ENCODE measurements at regions of chr15 and their contacts with region 1.

Region 1: DNA sequence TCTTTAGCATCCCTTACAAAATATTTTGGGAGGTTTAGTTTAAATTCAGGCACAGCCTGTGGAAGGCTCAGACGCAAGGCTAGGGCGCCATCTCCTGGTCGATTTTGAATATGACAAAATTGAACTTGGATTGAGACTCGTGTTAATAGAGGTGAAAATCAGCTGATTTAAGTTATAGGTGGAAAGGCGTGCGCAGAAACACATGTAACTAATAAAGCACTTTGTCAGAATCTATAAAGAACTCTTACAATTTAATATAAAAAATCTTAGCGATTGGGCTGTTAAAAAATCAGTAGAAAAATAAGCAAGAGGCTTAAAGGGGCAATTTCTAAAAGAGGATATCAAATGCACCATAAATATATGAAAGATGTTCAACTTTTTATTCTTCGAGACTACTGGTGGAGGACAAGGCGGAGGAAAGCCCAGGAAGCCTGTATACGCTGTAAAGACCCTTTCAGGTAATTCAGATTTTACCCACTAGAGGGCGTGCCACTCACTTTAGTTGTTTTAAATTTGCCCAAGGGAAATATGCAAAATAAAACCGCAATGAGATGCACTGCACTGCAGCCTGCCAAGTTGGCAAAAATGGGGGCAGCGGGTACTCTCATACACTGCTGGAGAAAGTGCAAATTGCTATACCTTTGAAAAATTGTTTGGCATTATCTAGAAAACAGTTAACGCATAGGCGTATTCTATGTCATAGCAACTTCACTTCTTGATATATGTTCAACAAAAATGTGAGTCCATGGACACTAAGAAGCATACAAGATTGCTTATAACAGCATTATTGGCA is 64.7 kb downstream of the SLC30A4 start:
- DNase-seq: peak; percentile 81
- H3K4me3 Mint-ChIP-seq: peak overlapping the region; percentile 54
- H3K27ac Mint-ChIP-seq: peak overlapping the region; percentile 69
- H3K4me1 Mint-ChIP-seq: peaks cover 47% of the 10 kb centered on the region
- H3K27me3 Mint-ChIP-seq: no peaks in the 10 kb centered on the region
- CTCF ChIP-seq: peak; percentile 55

Region 2: DNA sequence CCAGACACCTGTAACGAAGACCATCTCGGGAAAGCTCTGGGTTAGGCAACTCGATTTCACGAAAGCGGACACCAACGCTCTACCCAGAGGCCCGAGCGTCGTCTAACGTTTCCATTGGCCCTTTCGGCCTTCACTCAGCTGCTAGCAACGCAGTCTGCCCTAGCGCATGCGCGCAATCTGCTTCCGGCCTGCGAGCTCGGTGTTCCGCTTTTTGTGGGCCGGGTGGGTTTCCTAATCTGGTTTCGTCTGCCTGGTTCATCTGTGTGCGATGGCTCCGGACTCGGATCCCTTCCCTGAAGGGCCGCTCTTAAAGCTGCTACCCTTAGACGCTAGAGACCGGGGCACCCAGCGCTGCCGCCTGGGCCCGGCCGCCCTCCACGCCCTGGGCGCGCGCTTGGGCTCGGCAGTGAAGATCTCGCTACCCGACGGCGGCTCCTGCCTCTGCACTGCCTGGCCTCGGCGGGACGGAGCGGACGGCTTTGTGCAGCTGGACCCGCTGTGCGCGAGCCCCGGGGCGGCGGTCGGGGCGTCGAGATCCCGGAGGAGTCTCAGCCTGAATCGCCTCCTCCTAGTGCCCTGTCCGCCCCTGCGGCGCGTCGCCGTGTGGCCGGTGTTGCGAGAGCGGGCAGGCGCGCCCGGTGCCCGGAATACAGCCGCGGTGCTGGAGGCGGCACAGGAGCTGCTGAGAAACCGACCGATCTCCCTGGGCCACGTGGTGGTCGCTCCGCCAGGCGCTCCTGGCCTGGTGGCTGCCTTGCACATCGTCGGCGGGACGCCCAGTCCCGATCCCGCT is 55.5 kb before region 1 on chr15:
- CTCF ChIA-PET with region 1: no interaction called
- intact Hi-C with region 1: no loop called
- DNase-seq: peak; percentile 94
- H3K4me3 Mint-ChIP-seq: peak overlapping the region; percentile 93
- H3K27ac Mint-ChIP-seq: peak overlapping the region; percentile 58
- H3K4me1 Mint-ChIP-seq: peaks cover 9% of the 10 kb centered on the region
- H3K27me3 Mint-ChIP-seq: no peaks in the 10 kb centered on the region
- CTCF ChIP-seq: no peak

Region 3: DNA sequence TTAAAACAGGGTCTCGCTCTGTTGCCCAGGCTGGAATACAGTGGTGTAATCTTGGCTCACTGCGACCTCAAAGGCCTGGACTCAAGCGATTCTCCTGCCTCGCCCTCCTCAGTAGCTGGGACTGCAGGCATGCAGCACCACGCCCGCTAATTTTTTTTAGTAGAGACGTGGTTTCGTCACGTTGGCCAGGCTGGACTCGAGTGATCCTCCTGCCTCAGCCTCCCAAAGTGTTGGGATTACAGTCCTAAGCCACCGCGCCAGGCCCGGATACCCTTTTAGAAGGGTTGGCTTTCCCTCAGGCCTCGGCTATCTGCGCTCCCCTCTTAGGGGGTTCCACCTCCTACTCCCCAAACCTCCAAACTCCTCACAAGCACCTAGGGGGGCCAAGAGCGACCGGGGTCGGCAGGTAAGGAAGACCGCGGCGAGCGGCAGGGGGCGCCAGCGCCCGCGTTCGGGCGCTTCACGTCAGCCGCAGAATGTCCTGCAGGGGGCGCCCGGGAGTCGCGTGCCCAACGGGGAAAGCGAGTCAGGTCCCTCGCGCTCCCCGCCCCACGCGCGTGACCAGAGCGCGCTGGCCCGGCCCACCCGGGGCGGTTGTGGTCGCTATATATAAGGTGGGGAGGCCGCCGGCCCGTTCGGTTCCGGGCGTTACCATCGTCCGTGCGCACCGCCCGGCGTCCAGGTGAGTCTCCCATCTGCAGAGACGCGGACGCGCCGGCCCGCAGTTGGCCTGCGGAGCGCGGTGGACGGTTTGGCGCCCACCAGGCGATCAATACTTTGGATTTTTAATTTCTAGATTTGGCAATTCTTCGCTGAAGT is 27.7 kb before region 1 on chr15:
- CTCF ChIA-PET with region 1: interaction called, 10 read pairs
- intact Hi-C with region 1: loop called (anchors 1 kb)
- DNase-seq: peak; percentile 88
- H3K4me3 Mint-ChIP-seq: peak overlapping the region; percentile 64
- H3K27ac Mint-ChIP-seq: peak overlapping the region; percentile 50
- H3K4me1 Mint-ChIP-seq: peaks cover 13% of the 10 kb centered on the region
- H3K27me3 Mint-ChIP-seq: no peaks in the 10 kb centered on the region
- CTCF ChIP-seq: peak; percentile 99

Region 4: DNA sequence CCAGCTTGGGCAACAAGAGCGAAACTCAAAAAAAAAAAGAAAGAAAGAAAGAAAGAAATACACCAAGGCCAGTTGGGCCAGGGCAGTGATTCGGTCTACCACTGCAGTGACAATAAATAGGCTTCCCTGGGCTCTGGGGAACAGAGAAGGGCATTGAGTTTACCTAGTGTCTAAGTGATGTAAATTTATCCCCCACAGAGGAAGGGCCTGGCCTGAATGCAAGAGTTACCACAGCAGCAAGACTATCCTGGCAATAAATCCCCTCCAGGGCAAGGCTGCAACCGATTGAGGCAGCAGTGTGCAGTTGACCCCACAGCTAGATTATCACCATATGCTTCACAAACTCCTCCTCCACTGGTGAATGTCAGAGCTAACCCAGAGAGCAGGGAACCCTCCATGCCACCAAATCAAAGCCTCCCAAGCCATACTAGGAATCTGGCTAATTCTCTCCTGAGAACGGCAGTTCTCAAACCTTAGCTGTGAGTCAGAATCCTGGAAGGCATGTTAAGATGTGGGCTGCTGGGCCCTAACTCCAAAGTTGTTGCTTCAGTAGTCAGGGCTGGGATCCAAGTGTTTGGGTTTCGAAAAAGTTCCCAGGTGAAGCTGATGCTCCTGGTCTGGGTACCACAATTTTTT is 15.2 kb before region 1 on chr15:
- CTCF ChIA-PET with region 1: interaction called, 16 read pairs
- intact Hi-C with region 1: no loop called
- DNase-seq: no peak
- H3K4me3 Mint-ChIP-seq: no peak overlapping the region
- H3K27ac Mint-ChIP-seq: peak overlapping the region; percentile 60
- H3K4me1 Mint-ChIP-seq: peaks cover 56% of the 10 kb centered on the region
- H3K27me3 Mint-ChIP-seq: no peaks in the 10 kb centered on the region
- CTCF ChIP-seq: no peak

Region 5: GRCh38 chr15:45611305-45611704 is 153.5 kb after region 1 on chr15:
- CTCF ChIA-PET with region 1: interaction called, 3 read pairs
- intact Hi-C with region 1: loop called (anchors 1 kb)
- DNase-seq: peak; percentile 14
- H3K4me3 Mint-ChIP-seq: no peak overlapping the region
- H3K27ac Mint-ChIP-seq: no peak overlapping the region
- H3K4me1 Mint-ChIP-seq: no peaks in the 10 kb centered on the region
- H3K27me3 Mint-ChIP-seq: no peaks in the 10 kb centered on the region
- CTCF ChIP-seq: no peak

Measured in Calu3 (cell line).